Left colon (tissue), 2 donors: ENCODE measurements at regions of chr17 and their contacts with region 1.

Region 1: DNA sequence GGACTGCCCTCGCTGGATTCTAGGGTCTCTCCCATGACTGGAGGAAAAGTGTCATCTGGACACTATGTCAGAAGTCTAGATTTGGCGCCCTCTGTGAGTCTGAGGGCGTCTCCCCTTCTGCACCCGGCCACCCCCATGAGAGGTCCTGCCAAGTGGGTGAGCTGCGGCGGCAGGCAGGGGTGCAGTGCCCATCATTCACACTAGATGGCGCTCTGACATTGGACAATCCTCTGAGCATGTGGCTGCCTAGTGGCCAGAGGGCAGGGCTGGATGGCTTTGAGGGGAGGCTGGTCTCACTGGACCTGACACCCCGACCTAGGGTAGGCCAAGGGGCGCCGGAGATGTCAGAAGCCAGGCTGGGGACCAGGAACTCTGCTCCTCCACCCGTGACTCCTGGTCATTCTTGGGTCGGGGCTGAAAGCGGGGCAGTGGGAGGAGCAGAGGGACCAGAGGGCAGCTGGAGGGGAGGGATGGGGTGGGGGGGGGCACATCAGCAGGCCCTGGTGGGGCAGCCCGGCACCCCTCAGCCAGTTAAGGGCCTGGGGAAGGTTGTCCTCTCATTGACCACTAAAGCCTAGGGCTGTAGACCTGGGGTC is 28.0 kb downstream of the MRM1 start:
- DNase-seq: peak; percentile 39 to 82
- ATAC-seq: peak; percentile 89

Region 2: GRCh38 chr17:37047631-37048104 is 418.3 kb after region 1 on chr17:
- intact Hi-C with region 1: loop called in 1 of 2 experiments (anchors 10 kb)
- DNase-seq: peak; percentile 68 to 82
- ATAC-seq: peak; percentile 52